Endothelial cell of umbilical vein (primary cell): ENCODE measurements at regions of chr17 and their contacts with region 1.

Region 1: DNA sequence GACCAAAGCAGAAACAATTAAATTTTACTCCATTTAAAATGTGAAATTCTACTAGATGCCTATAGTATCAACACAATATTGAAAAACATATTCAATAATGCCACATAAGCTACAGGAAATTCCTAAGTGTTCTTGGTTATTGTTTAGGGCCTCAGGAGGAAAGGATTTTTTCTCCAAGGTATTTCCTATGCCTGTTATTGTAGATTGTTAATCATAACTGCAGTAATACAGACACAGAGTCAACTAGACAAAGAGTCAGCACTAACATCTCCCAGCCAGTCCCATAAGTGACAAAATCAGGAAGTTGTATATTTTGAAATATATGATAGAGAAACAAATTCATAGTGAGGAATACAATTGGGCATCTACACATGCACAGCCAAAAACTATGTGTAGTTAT is 782.7 kb upstream of the KIF2B start:
- DNase-seq: peak; percentile 85
- H3K4me3 ChIP-seq: no peak overlapping the region
- H3K27ac ChIP-seq: peak overlapping the region; percentile 69
- H3K4me1 ChIP-seq: peaks cover 21% of the 10 kb centered on the region
- H3K27me3 ChIP-seq: no peaks in the 10 kb centered on the region
- CTCF ChIP-seq: no peak
- POLR2A ChIP-seq: peak; percentile 25

Region 2: GRCh38 chr17:52606098-52606497 is 433.9 kb before region 1 on chr17:
- CTCF ChIA-PET with region 1: no interaction called
- POLR2A ChIA-PET with region 1: no interaction called
- dilution Hi-C with region 1: no loop called
- intact Hi-C with region 1: loop called (anchors 10 kb)
- DNase-seq: peak; percentile 60
- H3K4me3 ChIP-seq: no peak overlapping the region
- H3K27ac ChIP-seq: no peak overlapping the region
- H3K4me1 ChIP-seq: peaks cover 11% of the 10 kb centered on the region
- H3K27me3 ChIP-seq: no peaks in the 10 kb centered on the region
- CTCF ChIP-seq: no peak
- POLR2A ChIP-seq: no peak

Region 3: GRCh38 chr17:53137869-53138268 is 97.9 kb after region 1 on chr17:
- CTCF ChIA-PET with region 1: no interaction called
- POLR2A ChIA-PET with region 1: no interaction called
- dilution Hi-C with region 1: no loop called
- intact Hi-C with region 1: loop called (anchors 2 kb)
- DNase-seq: peak; percentile 73
- H3K4me3 ChIP-seq: no peak overlapping the region
- H3K27ac ChIP-seq: no peak overlapping the region
- H3K4me1 ChIP-seq: peaks cover 3% of the 10 kb centered on the region
- H3K27me3 ChIP-seq: no peaks in the 10 kb centered on the region
- CTCF ChIP-seq: no peak
- POLR2A ChIP-seq: no peak

Region 4: GRCh38 chr17:53217311-53217710 is 177.3 kb after region 1 on chr17:
- CTCF ChIA-PET with region 1: no interaction called
- POLR2A ChIA-PET with region 1: no interaction called
- dilution Hi-C with region 1: no loop called
- intact Hi-C with region 1: no loop called
- DNase-seq: no peak
- H3K4me3 ChIP-seq: no peak overlapping the region
- H3K27ac ChIP-seq: no peak overlapping the region
- H3K4me1 ChIP-seq: no peaks in the 10 kb centered on the region
- H3K27me3 ChIP-seq: no peaks in the 10 kb centered on the region
- CTCF ChIP-seq: no peak
- POLR2A ChIP-seq: no peak

Region 5: GRCh38 chr17:53227514-53227913 is 187.5 kb after region 1 on chr17:
- CTCF ChIA-PET with region 1: no interaction called
- POLR2A ChIA-PET with region 1: no interaction called
- dilution Hi-C with region 1: no loop called
- intact Hi-C with region 1: loop called (anchors 5 kb)
- DNase-seq: no peak
- H3K4me3 ChIP-seq: no peak overlapping the region
- H3K27ac ChIP-seq: no peak overlapping the region
- H3K4me1 ChIP-seq: no peaks in the 10 kb centered on the region
- H3K27me3 ChIP-seq: no peaks in the 10 kb centered on the region
- CTCF ChIP-seq: no peak
- POLR2A ChIP-seq: no peak